Activated CD4-positive, alpha-beta memory T cell treated with anti-CD3 and anti-CD28 coated beads for 36 hours (primary cell): ENCODE measurements at regions of chr1 and their contacts with region 1.

Region 1: GRCh38 chr1:98053471-98054366 is 132.9 kb upstream of the DPYD start:
- DNase-seq: peak; percentile 63
- H3K4me3 Mint-ChIP-seq: peak overlapping the region; percentile 35
- H3K27ac Mint-ChIP-seq: no peak overlapping the region
- H3K4me1 Mint-ChIP-seq: peaks cover 20% of the 10 kb centered on the region
- H3K27me3 Mint-ChIP-seq: peaks cover 63% of the 10 kb centered on the region

Region 2: DNA sequence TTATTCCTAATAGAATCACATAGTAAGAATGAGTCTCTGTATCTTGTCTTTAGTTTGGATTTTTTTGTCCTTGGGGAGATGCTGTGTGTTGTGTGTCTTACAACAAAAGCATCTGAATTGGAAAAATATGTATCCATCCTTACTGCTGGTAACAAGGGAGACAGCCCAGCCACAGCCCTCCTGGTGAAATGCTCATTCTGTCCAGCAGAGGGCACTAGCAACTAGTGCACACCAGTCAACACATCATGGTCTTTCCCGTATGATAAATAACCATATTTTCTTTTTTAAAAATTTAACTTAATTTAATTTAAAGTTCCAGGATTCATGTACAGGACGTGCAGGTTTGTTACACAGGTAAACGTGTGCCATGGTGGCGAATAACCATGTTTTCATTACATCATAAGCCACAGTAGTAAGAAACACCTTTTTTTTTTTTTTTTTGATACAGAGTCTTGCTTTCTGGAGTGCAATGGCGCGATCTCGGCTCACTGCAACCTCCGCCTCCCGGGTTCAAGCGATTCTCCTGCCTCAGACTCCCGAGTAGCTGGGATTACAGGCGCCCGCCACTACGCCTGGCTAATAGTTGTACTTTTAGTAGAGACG is 1087.1 kb before region 1 on chr1:
- CTCF ChIA-PET with region 1: interaction called, 10 read pairs
- POLR2A ChIA-PET with region 1: no interaction called
- intact Hi-C with region 1: loop called (anchors 1 kb)
- DNase-seq: peak; percentile 79
- H3K4me3 Mint-ChIP-seq: no peak overlapping the region
- H3K27ac Mint-ChIP-seq: no peak overlapping the region
- H3K4me1 Mint-ChIP-seq: no peaks in the 10 kb centered on the region
- H3K27me3 Mint-ChIP-seq: peaks cover 19% of the 10 kb centered on the region

Region 3: GRCh38 chr1:97137862-97138514 is 915.7 kb before region 1 on chr1:
- CTCF ChIA-PET with region 1: interaction called, 7 read pairs
- POLR2A ChIA-PET with region 1: no interaction called
- intact Hi-C with region 1: loop called (anchors 1 kb)
- DNase-seq: no peak
- H3K4me3 Mint-ChIP-seq: no peak overlapping the region
- H3K27ac Mint-ChIP-seq: no peak overlapping the region
- H3K4me1 Mint-ChIP-seq: no peaks in the 10 kb centered on the region
- H3K27me3 Mint-ChIP-seq: no peaks in the 10 kb centered on the region

Region 4: GRCh38 chr1:97186404-97186803 is 867.3 kb before region 1 on chr1:
- CTCF ChIA-PET with region 1: no interaction called
- POLR2A ChIA-PET with region 1: no interaction called
- intact Hi-C with region 1: loop called (anchors 1 kb)
- DNase-seq: no peak
- H3K4me3 Mint-ChIP-seq: no peak overlapping the region
- H3K27ac Mint-ChIP-seq: no peak overlapping the region
- H3K4me1 Mint-ChIP-seq: no peaks in the 10 kb centered on the region
- H3K27me3 Mint-ChIP-seq: no peaks in the 10 kb centered on the region

Region 5: DNA sequence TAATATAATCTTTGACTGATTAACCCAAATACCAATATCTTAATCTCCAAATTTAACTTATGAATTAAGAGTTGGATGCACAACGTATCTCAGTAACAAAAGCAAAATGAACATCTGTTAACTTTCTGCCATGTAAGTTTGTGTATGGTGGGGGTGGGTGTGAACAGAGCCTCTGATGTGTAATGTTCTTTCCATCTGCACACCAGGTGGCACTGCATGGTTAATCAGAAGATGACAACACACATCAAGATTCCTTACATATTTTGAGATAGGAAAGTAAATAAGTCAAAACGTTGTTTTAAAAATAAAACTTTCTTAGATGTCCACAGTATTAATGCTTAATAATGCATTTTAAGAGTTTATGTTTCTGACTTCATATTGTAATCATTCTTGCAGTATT is 384.8 kb before region 1 on chr1:
- CTCF ChIA-PET with region 1: no interaction called
- POLR2A ChIA-PET with region 1: no interaction called
- intact Hi-C with region 1: loop called (anchors 2 kb)
- DNase-seq: no peak
- H3K4me3 Mint-ChIP-seq: no peak overlapping the region
- H3K27ac Mint-ChIP-seq: no peak overlapping the region
- H3K4me1 Mint-ChIP-seq: no peaks in the 10 kb centered on the region
- H3K27me3 Mint-ChIP-seq: no peaks in the 10 kb centered on the region

Region 6: GRCh38 chr1:97820470-97821188 is 233.1 kb before region 1 on chr1:
- CTCF ChIA-PET with region 1: interaction called, 5 read pairs
- POLR2A ChIA-PET with region 1: no interaction called
- intact Hi-C with region 1: loop called (anchors 5 kb)
- DNase-seq: no peak
- H3K4me3 Mint-ChIP-seq: no peak overlapping the region
- H3K27ac Mint-ChIP-seq: no peak overlapping the region
- H3K4me1 Mint-ChIP-seq: no peaks in the 10 kb centered on the region
- H3K27me3 Mint-ChIP-seq: no peaks in the 10 kb centered on the region

Region 7: DNA sequence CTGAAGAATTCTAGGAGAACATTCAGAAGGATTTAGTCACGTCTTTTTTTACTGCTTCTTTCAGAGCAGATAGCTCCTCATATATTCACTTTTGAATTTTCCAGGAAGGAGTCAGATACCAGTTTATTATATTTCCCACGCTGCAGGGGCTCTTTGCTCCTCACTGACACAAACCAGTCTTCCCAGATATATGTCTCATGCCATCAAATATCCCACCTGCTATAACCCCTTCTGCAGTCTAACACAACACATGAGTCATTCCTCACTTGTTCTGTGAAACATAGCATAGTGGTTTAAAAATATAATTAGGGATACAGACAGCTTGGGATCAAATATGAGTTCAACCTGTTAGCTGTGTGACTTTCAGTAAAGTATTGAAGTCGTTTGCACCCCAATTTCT is 118.9 kb after region 1 on chr1:
- CTCF ChIA-PET with region 1: no interaction called
- POLR2A ChIA-PET with region 1: no interaction called
- intact Hi-C with region 1: no loop called
- DNase-seq: no peak
- H3K4me3 Mint-ChIP-seq: no peak overlapping the region
- H3K27ac Mint-ChIP-seq: no peak overlapping the region
- H3K4me1 Mint-ChIP-seq: no peaks in the 10 kb centered on the region
- H3K27me3 Mint-ChIP-seq: peaks cover 3% of the 10 kb centered on the region

Region 8: DNA sequence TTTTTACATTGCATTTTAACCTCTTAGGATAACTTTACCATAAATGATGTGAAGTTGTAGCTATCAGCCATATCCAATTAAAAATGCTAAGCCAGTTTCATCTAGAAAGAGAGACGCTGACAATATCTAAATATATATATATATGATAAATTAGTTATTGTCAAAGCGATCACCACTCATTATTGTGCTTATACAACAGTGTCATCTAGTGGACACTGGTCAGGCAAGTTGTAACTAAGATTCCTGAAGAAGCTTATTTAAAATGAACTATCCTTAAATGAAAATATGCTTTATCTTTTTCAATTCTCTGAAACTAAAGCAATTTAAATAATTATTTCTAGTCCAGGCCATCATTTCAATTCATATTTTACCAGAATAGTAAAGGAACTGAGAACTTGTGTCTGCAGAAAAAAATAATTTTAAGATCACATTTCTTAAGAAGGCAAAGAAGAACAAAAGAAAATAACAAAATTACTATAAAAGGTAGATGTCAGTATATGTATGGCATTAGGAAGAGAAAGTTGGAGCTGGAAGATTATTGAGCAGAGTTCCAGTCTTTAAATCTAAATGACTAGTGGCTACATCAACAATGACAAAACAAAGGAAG is 414.5 kb after region 1 on chr1:
- CTCF ChIA-PET with region 1: interaction called, 6 read pairs
- POLR2A ChIA-PET with region 1: no interaction called
- intact Hi-C with region 1: loop called (anchors 5 kb)
- DNase-seq: no peak
- H3K4me3 Mint-ChIP-seq: no peak overlapping the region
- H3K27ac Mint-ChIP-seq: no peak overlapping the region
- H3K4me1 Mint-ChIP-seq: no peaks in the 10 kb centered on the region
- H3K27me3 Mint-ChIP-seq: no peaks in the 10 kb centered on the region